ENCODE measurements at regions of chr9 and their contacts with region 1.

Region 1: GRCh38 chr9:78439190-78439865 is 142.4 kb downstream of the PSAT1 start:
- DNase-seq: peak; percentile 87
- H3K4me3 ChIP-seq: peak overlapping the region; percentile 41
- CTCF ChIP-seq: peak; percentile 88

Region 2: DNA sequence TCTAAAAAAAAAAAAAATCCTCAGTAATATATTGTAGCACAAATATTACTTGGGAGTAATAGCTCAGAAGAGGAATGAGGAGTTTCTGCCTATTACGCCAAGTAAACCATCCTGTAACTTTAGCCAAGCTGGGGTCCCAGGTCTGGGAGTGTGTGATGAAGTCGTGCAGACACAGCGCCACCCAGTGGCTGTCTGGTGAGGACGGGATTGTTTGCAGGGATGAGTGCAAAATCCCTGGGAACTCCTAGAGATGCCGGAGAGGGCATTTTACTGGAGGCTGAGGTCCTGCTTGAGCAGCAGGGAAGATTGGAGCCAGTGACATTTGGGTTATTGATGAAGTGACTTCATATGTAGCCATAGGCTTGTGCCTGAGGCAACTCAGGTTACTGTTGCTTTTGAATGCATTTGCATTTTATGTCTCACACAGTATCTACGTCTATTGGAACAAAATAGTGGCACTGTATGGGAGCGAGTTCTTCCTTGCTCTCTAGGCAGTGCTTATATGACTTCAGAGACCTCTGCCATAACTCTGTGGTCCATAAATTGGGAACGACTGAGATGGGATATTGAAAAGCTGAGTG is 69.6 kb before region 1 on chr9:
- CTCF ChIA-PET with region 1: interaction called, 10 read pairs
- POLR2A ChIA-PET with region 1: no interaction called
- DNase-seq: no peak
- H3K4me3 ChIP-seq: no peak overlapping the region
- CTCF ChIP-seq: peak; percentile 84

Region 3: GRCh38 chr9:78462616-78463015 is 23.3 kb after region 1 on chr9:
- CTCF ChIA-PET with region 1: interaction called, 10 read pairs
- POLR2A ChIA-PET with region 1: no interaction called
- DNase-seq: peak; percentile 23
- H3K4me3 ChIP-seq: no peak overlapping the region
- CTCF ChIP-seq: no peak

Region 4: DNA sequence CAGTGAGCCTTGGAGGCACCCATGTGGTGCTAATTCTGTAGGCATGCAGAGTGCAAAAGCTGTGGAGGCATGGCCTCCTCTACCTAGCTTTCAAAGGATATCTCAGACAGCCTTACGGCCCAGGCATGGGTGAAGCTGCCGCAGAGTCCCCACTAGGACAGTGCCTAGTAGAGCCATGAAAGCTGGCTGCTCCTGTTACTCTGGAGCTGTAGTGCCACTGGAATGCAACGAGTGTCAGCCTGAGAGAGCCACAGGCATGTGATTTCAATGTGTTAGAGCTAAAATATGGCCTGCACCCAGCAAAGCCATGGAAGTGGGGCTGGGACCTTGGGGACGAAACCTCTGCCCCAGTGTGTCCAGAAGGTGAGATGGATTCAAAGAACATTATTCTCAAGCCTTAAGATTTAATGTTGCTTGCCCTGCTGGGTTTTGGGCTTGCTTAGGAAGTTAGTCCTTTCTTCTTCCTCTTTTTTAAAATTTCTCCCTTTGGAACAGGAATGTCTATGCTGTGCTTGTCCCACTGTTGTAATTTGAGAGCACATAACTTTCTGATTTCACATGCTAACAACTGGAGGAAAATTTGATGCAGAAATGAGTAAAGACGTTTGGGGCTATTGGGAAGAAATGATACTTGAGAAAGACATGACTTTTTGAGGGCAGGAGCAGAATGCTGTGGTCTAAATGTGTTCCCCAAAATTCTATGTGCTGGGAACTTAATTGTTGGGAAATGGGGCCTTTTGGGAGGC is 156.0 kb after region 1 on chr9:
- CTCF ChIA-PET with region 1: interaction called, 47 read pairs
- POLR2A ChIA-PET with region 1: no interaction called
- DNase-seq: no peak
- H3K4me3 ChIP-seq: no peak overlapping the region
- CTCF ChIP-seq: no peak

Region 5: GRCh38 chr9:78601957-78602565 is 162.7 kb after region 1 on chr9:
- CTCF ChIA-PET with region 1: interaction called, 47 read pairs
- POLR2A ChIA-PET with region 1: no interaction called
- DNase-seq: no peak
- H3K4me3 ChIP-seq: no peak overlapping the region
- CTCF ChIP-seq: peak; percentile 72

Region 6: DNA sequence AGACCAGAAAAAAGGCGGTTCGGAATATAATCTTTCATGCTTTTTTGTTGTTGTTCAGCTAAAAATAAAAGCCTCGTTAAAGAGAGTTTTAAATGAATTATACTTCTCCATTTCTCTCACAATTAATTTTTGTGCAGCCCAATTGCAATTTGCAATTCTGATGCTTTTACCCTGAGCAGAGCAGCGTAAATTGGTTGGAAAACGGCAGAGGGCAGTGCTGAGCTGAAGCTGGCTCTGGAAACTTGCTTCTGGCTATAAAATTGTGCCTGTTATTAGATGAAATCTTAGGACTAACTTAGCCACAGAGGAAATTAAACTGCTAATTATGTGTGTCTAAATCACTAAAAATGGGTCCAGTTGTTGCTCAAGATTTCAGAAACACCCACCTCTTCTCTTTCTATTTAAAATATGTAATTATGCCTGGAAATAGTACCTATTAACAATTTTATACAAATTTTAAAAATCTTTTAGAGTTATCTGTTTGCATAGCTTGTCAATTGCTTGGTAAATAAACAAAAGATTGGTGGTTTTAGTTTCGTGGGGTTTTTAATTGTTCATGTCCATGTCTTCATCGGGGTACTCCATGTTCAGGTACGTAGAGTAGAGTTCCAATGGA is 690.6 kb after region 1 on chr9:
- CTCF ChIA-PET with region 1: interaction called, 11 read pairs
- POLR2A ChIA-PET with region 1: no interaction called
- DNase-seq: no peak
- H3K4me3 ChIP-seq: no peak overlapping the region
- CTCF ChIP-seq: peak; percentile 81

Measured in AG04449 (cell line).